Activated CD8-positive, alpha-beta T cell treated with anti-CD3 and anti-CD28 coated beads for 36 hours (primary cell): ENCODE measurements at regions of chr17 and their contacts with region 1.

Region 1: DNA sequence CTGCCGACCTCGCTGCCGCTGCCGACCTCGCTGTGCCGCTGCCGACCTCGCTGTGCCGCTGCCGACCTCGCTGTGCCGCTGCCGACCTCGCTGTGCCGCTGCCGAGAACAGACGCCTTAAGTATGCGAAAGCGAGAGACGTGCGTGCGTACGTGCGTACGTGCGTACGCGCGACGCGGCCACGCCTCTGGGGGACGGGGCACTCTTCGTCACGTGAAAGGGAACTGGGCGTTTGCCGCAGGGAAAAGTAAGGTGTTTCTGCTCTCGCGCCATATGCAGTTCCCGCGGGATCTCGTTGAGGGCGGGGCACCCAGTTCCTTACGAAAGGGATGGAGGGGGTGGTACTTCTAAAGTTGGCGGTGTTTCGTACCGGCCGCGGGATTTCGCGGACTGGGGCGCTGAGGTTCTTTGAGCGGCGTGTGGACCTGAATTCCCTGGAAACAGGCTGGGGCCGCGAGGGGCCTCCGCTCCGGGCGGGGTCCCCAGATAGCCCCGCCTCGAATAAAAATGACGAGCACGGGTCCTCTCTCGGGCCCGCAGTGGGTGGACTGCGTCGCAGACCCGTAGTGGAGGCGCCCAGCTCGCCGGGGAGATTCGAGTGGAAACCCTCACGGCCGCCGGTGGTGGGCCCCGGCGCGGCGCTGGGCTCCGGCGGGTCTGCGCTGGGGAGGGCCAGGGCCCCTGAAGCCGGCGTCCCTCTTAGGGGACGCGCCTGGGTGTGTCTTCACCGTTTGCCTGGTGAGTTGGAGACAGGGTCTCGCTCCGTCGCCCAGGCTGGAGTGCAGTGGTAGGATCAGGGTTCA is at the start of gene EIF4A3:
- DNase-seq: peak; percentile 99
- ATAC-seq: peak; percentile 93
- H3K4me3 Mint-ChIP-seq: peak within 1 kb of the TSS; percentile 84
- H3K27ac Mint-ChIP-seq: peak within 1 kb of the TSS; percentile 94
- H3K4me1 Mint-ChIP-seq: peaks cover 36% of the 10 kb centered on the region
- H3K27me3 Mint-ChIP-seq: no peaks in the 10 kb centered on the region
- CTCF ChIP-seq: no peak
- total RNA-seq, gene EIF4A3: 178 to 183 TPM

Region 2: GRCh38 chr17:80082403-80083135 is 64.7 kb before region 1 on chr17:
- CTCF ChIA-PET with region 1: interaction called, 26 read pairs
- POLR2A ChIA-PET with region 1: interaction called, 4 read pairs
- intact Hi-C with region 1: no loop called
- DNase-seq: peak; percentile 79
- ATAC-seq: peak; percentile 91
- H3K4me3 Mint-ChIP-seq: no peak overlapping the region
- H3K27ac Mint-ChIP-seq: peak overlapping the region; percentile 52
- H3K4me1 Mint-ChIP-seq: peaks cover 3% of the 10 kb centered on the region
- H3K27me3 Mint-ChIP-seq: no peaks in the 10 kb centered on the region
- CTCF ChIP-seq: peak; percentile 88

Region 3: GRCh38 chr17:80132906-80133625 is 14.2 kb before region 1 on chr17:
- CTCF ChIA-PET with region 1: interaction called, 3 read pairs
- POLR2A ChIA-PET with region 1: interaction called, 22 read pairs
- intact Hi-C with region 1: no loop called
- DNase-seq: no peak
- ATAC-seq: no peak
- H3K4me3 Mint-ChIP-seq: no peak overlapping the region
- H3K27ac Mint-ChIP-seq: peak overlapping the region; percentile 4
- H3K4me1 Mint-ChIP-seq: no peaks in the 10 kb centered on the region
- H3K27me3 Mint-ChIP-seq: peaks cover 9% of the 10 kb centered on the region
- CTCF ChIP-seq: no peak

Region 4: GRCh38 chr17:80263253-80264204 is 116.3 kb after region 1 on chr17:
- CTCF ChIA-PET with region 1: no interaction called
- POLR2A ChIA-PET with region 1: interaction called, 19 read pairs
- intact Hi-C with region 1: no loop called
- DNase-seq: peak; percentile 98
- ATAC-seq: peak; percentile 40
- H3K4me3 Mint-ChIP-seq: peak overlapping the region; percentile 89
- H3K27ac Mint-ChIP-seq: peak overlapping the region; percentile 89
- H3K4me1 Mint-ChIP-seq: peaks cover 49% of the 10 kb centered on the region
- H3K27me3 Mint-ChIP-seq: no peaks in the 10 kb centered on the region
- CTCF ChIP-seq: no peak